ENCODE measurements at regions of chr5 and their contacts with region 1.

Region 1: GRCh38 chr5:111223889-111224563 is at the start of gene CAMK4:
- DNase-seq: peak; percentile 83 to 87 (median 84)
- H3K4me3 ChIP-seq: peak within 1 kb of the TSS; percentile 74 to 87
- H3K4me3 Mint-ChIP-seq: peak within 1 kb of the TSS; percentile 94 to 98 (median 96)
- H3K27ac ChIP-seq: peak within 1 kb of the TSS; percentile 82
- H3K27ac Mint-ChIP-seq: peak within 1 kb of the TSS; percentile 88 to 97 (median 94)
- H3K4me1 ChIP-seq: peaks cover 34% of the 10 kb centered on the region
- H3K4me1 Mint-ChIP-seq: peaks cover 19 to 51% (median 30%) of the 10 kb centered on the region in 4 donors
- H3K27me3 ChIP-seq: no peaks in the 10 kb centered on the region
- H3K27me3 Mint-ChIP-seq: no peaks in the 10 kb centered on the region
- total RNA-seq, gene CAMK4: 243 to 257 TPM

Region 2: DNA sequence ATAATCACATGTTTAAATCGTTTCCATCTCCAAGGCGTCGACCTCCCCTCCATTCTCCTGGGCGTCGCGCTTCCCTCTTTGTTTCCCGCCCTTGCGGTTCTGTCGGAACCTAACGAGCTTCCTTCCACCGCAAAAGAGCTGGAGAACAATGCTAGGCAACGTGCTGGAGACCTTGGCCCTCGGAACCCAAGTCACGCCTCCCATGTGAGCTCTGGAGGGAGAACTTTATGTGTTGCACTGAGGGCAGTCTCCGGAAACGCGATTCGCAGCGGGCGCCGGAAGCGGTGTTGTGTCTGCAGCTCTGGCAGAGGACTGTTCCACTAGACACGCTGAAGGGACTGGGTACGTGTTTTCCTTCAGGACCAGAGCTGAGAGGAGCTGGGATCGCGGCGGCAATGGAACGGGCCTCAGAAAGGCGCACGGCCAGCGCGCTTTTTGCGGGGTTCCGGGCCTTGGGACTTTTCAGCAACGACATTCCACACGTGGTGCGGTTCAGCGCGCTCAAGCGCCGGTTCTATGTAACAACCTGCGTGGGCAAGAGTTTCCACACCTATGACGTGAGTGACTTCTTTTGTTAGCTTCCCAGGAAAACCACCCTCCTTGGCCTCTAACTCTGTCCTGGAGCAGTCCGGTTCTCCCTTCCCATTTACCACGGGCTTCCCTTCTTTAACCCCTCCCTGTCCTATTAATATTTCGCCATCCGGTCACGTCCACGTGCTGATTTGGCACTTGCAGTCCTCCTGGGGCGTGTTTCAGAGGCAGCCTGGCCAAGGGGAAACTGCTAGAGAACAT is 131.8 kb before region 1 on chr5 and contains the start of gene WDR36:
- CTCF ChIA-PET with region 1: no interaction called
- POLR2A ChIA-PET with region 1: interaction called, 3 read pairs
- intact Hi-C with region 1: loop called (anchors 5 kb)
- DNase-seq: peak; percentile 85 to 91 (median 87)
- H3K4me3 ChIP-seq: peak within 1 kb of the TSS; percentile 82 to 90
- H3K4me3 Mint-ChIP-seq: peak within 1 kb of the TSS; percentile 90 to 98 (median 97)
- H3K27ac ChIP-seq: peak within 1 kb of the TSS; percentile 73
- H3K27ac Mint-ChIP-seq: peak within 1 kb of the TSS; percentile 83 to 98 (median 96)
- H3K4me1 ChIP-seq: peaks cover 25% of the 10 kb centered on the region
- H3K4me1 Mint-ChIP-seq: peaks cover 15 to 34% (median 27%) of the 10 kb centered on the region in 4 donors
- H3K27me3 ChIP-seq: no peaks in the 10 kb centered on the region
- H3K27me3 Mint-ChIP-seq: peaks cover 1 to 7% of the 10 kb centered on the region in 2 donors
- total RNA-seq, gene WDR36: 26.3 to 27.6 TPM

Region 3: GRCh38 chr5:111135946-111136345 is 88.1 kb before region 1 on chr5:
- CTCF ChIA-PET with region 1: no interaction called
- POLR2A ChIA-PET with region 1: no interaction called
- intact Hi-C with region 1: no loop called
- DNase-seq: no peak
- H3K4me3 ChIP-seq: no peak overlapping the region
- H3K4me3 Mint-ChIP-seq: no peak overlapping the region
- H3K27ac ChIP-seq: no peak overlapping the region
- H3K27ac Mint-ChIP-seq: no peak overlapping the region
- H3K4me1 ChIP-seq: no peaks in the 10 kb centered on the region
- H3K4me1 Mint-ChIP-seq: no peaks in the 10 kb centered on the region
- H3K27me3 ChIP-seq: no peaks in the 10 kb centered on the region
- H3K27me3 Mint-ChIP-seq: no peaks in the 10 kb centered on the region

Region 4: DNA sequence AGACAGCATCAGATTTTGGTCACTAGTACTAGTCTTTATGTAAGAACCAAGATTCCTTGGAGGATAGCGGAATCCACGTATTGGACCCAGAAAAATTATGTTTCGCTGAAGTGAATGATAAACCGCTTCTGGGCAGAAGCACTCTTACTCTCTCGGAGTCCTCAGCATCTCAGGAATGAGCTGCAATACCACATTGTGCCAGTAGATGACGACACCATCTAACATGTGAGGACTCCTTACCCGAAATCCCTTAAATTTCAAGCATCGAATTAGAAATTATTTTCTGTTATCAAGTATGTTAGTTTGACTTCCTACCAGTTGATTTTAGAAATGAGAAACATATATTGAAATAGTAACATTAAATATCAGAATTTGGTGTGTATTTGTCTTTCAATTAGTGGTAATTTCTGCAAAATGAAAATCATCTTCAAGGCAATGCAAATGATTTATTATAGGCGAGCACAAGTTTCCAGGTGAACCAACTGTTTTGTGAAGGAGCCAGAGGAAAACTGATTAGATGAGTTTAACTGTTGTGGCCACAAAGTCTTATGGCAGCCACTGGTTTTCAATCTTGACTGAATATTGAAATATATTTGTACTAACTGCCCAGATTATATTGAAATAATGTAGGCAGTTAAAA is 65.8 kb before region 1 on chr5:
- CTCF ChIA-PET with region 1: interaction called, 37 read pairs
- POLR2A ChIA-PET with region 1: interaction called, 3 read pairs
- intact Hi-C with region 1: loop called (anchors 1 kb)
- DNase-seq: peak; percentile 66 to 79 (median 72)
- H3K4me3 ChIP-seq: no peak overlapping the region
- H3K4me3 Mint-ChIP-seq: peak overlapping the region in 1 of 8 donors; percentile 15
- H3K27ac ChIP-seq: no peak overlapping the region
- H3K27ac Mint-ChIP-seq: no peak overlapping the region
- H3K4me1 ChIP-seq: no peaks in the 10 kb centered on the region
- H3K4me1 Mint-ChIP-seq: peaks cover 0 to 6% (median 3%) of the 10 kb centered on the region in 4 donors
- H3K27me3 ChIP-seq: no peaks in the 10 kb centered on the region
- H3K27me3 Mint-ChIP-seq: peaks cover 4 to 7% of the 10 kb centered on the region in 2 donors

Region 5: DNA sequence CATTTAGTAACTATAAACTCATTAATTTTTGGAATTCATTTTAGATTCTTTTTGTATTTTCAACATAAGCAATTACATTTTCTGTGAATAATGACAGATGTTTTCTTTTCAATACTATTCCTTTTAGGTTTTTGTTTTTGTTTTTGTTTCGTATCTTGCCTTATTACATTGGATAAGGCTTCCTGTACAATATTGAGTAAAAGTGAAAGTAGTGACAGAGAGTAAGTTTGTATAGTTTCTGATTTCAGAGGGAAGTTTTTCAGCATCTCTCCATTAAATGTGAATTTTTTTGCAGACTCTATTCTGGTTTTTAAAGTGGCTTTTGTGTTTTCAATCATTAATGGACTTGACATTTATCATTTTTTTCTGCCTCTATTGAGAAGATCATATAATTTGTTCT is 12.7 kb before region 1 on chr5:
- CTCF ChIA-PET with region 1: interaction called, 7 read pairs
- POLR2A ChIA-PET with region 1: interaction called, 31 read pairs
- intact Hi-C with region 1: no loop called
- DNase-seq: no peak
- H3K4me3 ChIP-seq: no peak overlapping the region
- H3K4me3 Mint-ChIP-seq: peak overlapping the region in 7 of 8 donors; percentile 17 to 59 (median 35)
- H3K27ac ChIP-seq: no peak overlapping the region
- H3K27ac Mint-ChIP-seq: no peak overlapping the region
- H3K4me1 ChIP-seq: peaks cover 18% of the 10 kb centered on the region
- H3K4me1 Mint-ChIP-seq: peaks cover 5 to 15% (median 5%) of the 10 kb centered on the region in 4 donors
- H3K27me3 ChIP-seq: no peaks in the 10 kb centered on the region
- H3K27me3 Mint-ChIP-seq: no peaks in the 10 kb centered on the region

Region 6: GRCh38 chr5:111237470-111237869 is 13.4 kb after region 1 on chr5:
- CTCF ChIA-PET with region 1: interaction called, 50 read pairs
- POLR2A ChIA-PET with region 1: interaction called, 206 read pairs
- intact Hi-C with region 1: loop called (anchors 1 kb)
- DNase-seq: peak in 1 of 5 donors; percentile 15
- H3K4me3 ChIP-seq: no peak overlapping the region
- H3K4me3 Mint-ChIP-seq: peak overlapping the region; percentile 62 to 89 (median 78)
- H3K27ac ChIP-seq: peak overlapping the region; percentile 54
- H3K27ac Mint-ChIP-seq: peak overlapping the region; percentile 76 to 96 (median 91)
- H3K4me1 ChIP-seq: peaks cover 94% of the 10 kb centered on the region
- H3K4me1 Mint-ChIP-seq: peaks cover 78 to 95% (median 89%) of the 10 kb centered on the region in 4 donors
- H3K27me3 ChIP-seq: no peaks in the 10 kb centered on the region
- H3K27me3 Mint-ChIP-seq: no peaks in the 10 kb centered on the region

Region 7: DNA sequence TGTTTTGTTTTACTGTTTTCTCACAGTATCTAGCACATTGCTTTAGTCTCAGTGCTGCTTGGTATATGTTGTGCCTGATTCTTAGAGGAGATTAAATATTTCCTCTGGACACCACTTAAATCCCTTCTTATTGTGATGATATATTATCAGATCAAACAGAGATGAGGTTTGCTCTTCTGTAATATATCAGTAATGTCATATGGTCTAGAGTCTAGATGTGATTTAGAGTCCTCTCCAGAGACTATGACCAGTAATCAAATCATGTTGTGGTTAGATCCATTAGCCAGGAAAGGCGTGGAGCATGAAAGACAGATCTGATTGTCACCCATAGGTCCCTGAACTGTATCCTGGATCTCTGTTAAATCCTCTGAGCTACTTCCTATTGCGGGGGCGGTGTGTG is 24.5 kb after region 1 on chr5:
- CTCF ChIA-PET with region 1: interaction called, 27 read pairs
- POLR2A ChIA-PET with region 1: interaction called, 75 read pairs
- intact Hi-C with region 1: no loop called
- DNase-seq: no peak
- H3K4me3 ChIP-seq: no peak overlapping the region
- H3K4me3 Mint-ChIP-seq: peak overlapping the region in 4 of 8 donors; percentile 11 to 59 (median 53)
- H3K27ac ChIP-seq: no peak overlapping the region
- H3K27ac Mint-ChIP-seq: peak overlapping the region; percentile 7 to 81 (median 44)
- H3K4me1 ChIP-seq: peaks cover 78% of the 10 kb centered on the region
- H3K4me1 Mint-ChIP-seq: peaks cover 63 to 80% (median 72%) of the 10 kb centered on the region in 4 donors
- H3K27me3 ChIP-seq: no peaks in the 10 kb centered on the region
- H3K27me3 Mint-ChIP-seq: no peaks in the 10 kb centered on the region

Region 8: DNA sequence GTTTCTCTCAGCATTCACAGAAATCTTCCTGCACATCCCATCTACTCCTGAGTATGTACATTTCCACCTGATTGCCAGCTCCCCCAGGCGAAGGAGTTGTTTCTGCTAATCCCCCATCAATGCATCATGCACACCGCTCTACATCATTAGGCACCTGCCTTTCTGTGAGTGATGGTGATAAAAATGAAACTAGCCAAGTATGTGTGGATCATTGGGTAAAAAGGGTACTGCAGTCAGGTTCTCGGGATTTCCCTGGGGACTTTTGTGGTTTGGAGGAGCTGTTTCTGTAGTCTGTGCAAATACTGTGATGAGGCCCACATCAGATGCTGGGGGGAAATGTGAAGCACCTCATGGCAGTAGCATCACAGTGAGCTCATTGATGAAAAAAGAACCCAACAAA is 30.6 kb after region 1 on chr5:
- CTCF ChIA-PET with region 1: interaction called, 16 read pairs
- POLR2A ChIA-PET with region 1: interaction called, 75 read pairs
- intact Hi-C with region 1: loop called (anchors 5 kb)
- DNase-seq: peak; percentile 47 to 94 (median 58)
- H3K4me3 ChIP-seq: no peak overlapping the region
- H3K4me3 Mint-ChIP-seq: peak overlapping the region in 7 of 8 donors; percentile 71 to 84 (median 77)
- H3K27ac ChIP-seq: peak overlapping the region; percentile 78
- H3K27ac Mint-ChIP-seq: peak overlapping the region; percentile 82 to 93 (median 88)
- H3K4me1 ChIP-seq: peaks cover 74% of the 10 kb centered on the region
- H3K4me1 Mint-ChIP-seq: peaks cover 61 to 71% (median 70%) of the 10 kb centered on the region in 4 donors
- H3K27me3 ChIP-seq: no peaks in the 10 kb centered on the region
- H3K27me3 Mint-ChIP-seq: no peaks in the 10 kb centered on the region